ENCODE measurements at regions of chr1 and their contacts with region 1.

Region 1: GRCh38 chr1:165827268-165828102 is at the start of gene UCK2:
- DNase-seq: peak; percentile 71
- ATAC-seq: peak; percentile 90
- H3K4me3 ChIP-seq: peak within 1 kb of the TSS; percentile 81 to 87 (median 86)
- H3K27ac ChIP-seq: peak within 1 kb of the TSS; percentile 94
- H3K4me1 ChIP-seq: peaks cover 37% of the 10 kb centered on the region
- H3K27me3 ChIP-seq: peaks cover 0 to 4% of the 10 kb centered on the region in 2 experiments; a peak in 2 of 5 replicates
- CTCF ChIP-seq: no peak
- EP300 ChIP-seq: no peak
- POLR2A ChIP-seq: peak; percentile 74 to 84
- RAD21 ChIP-seq: peak; percentile 66
- total RNA-seq, gene UCK2: 61.2 and 64.3 TPM in 2 replicates

Region 2: GRCh38 chr1:165793951-165794350 is 33.5 kb before region 1 on chr1:
- CTCF ChIA-PET with region 1: no interaction called
- POLR2A ChIA-PET with region 1: no interaction called
- in situ Hi-C with region 1: no loop called
- intact Hi-C with region 1: no loop called
- DNase-seq: no peak
- ATAC-seq: no peak
- H3K4me3 ChIP-seq: no peak overlapping the region
- H3K27ac ChIP-seq: no peak overlapping the region
- H3K4me1 ChIP-seq: 0 out of 2 replicates have a peak, but pooled peaks cover 5% of the 10 kb centered on the region
- H3K27me3 ChIP-seq: no peaks in the 10 kb centered on the region; a peak in 1 of 5 replicates
- CTCF ChIP-seq: no peak
- EP300 ChIP-seq: no peak
- POLR2A ChIP-seq: no peak
- RAD21 ChIP-seq: no peak

Region 3: GRCh38 chr1:165857046-165857801 is 29.7 kb after region 1 on chr1:
- CTCF ChIA-PET with region 1: no interaction called
- POLR2A ChIA-PET with region 1: interaction called, 12 read pairs
- in situ Hi-C with region 1: no loop called
- intact Hi-C with region 1: no loop called
- DNase-seq: peak; percentile 76
- ATAC-seq: peak; percentile 77
- H3K4me3 ChIP-seq: no peak overlapping the region; a peak in 1 of 6 replicates
- H3K27ac ChIP-seq: peak overlapping the region; percentile 55
- H3K4me1 ChIP-seq: peaks cover 73% of the 10 kb centered on the region
- H3K27me3 ChIP-seq: no peaks in the 10 kb centered on the region
- CTCF ChIP-seq: no peak
- EP300 ChIP-seq: peak in 1 of 2 experiments; percentile 21; a peak in 1 of 4 replicates
- POLR2A ChIP-seq: no peak
- RAD21 ChIP-seq: no peak

Region 4: GRCh38 chr1:165871311-165872067 is 44.0 kb after region 1 on chr1:
- CTCF ChIA-PET with region 1: interaction called, 5 read pairs
- POLR2A ChIA-PET with region 1: interaction called, 6 read pairs
- in situ Hi-C with region 1: no loop called
- intact Hi-C with region 1: loop called (anchors 2 kb)
- DNase-seq: peak; percentile 92
- ATAC-seq: peak; percentile 99
- H3K4me3 ChIP-seq: no peak overlapping the region
- H3K27ac ChIP-seq: peak overlapping the region; percentile 67
- H3K4me1 ChIP-seq: peaks cover 35% of the 10 kb centered on the region
- H3K27me3 ChIP-seq: no peaks in the 10 kb centered on the region
- CTCF ChIP-seq: peak; percentile 92
- EP300 ChIP-seq: peak in 1 of 2 experiments; percentile 35; a peak in 1 of 4 replicates
- POLR2A ChIP-seq: no peak
- RAD21 ChIP-seq: peak; percentile 64

Region 5: DNA sequence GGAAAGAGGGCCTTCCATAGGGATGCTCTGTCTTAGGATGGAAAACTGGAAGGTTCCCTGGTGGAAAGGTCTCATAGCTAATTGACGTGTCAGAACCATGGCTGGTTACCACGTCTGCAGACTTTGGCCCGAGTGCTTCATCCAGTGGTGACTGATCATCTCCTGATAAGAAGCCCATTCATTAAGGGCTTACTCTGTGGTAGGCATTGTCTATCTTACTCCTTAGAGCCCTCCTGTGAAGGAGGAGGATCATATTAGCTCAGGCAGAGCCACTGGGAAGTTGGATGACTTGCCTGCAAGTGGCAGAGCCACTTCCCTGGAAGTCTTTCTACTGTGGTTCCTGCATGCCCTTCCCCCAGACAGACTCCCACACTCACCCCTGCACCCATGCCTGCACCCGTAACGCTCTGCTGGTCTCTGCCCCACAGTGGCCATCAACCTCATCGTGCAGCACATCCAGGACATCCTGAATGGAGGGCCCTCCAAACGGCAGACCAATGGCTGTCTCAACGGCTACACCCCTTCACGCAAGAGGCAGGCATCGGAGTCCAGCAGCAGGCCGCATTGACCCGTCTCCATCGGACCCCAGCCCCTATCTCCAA is 79.9 kb after region 1 on chr1:
- CTCF ChIA-PET with region 1: no interaction called
- POLR2A ChIA-PET with region 1: interaction called, 14 read pairs
- in situ Hi-C with region 1: loop called (anchors 5 kb)
- intact Hi-C with region 1: loop called (anchors 2 kb)
- DNase-seq: no peak
- ATAC-seq: no peak
- H3K4me3 ChIP-seq: no peak overlapping the region
- H3K27ac ChIP-seq: no peak overlapping the region
- H3K4me1 ChIP-seq: peaks cover 83% of the 10 kb centered on the region
- H3K27me3 ChIP-seq: no peaks in the 10 kb centered on the region
- CTCF ChIP-seq: no peak
- EP300 ChIP-seq: no peak
- POLR2A ChIP-seq: no peak
- RAD21 ChIP-seq: no peak